Activated T-helper 1 cell treated with anti-CD3 and anti-CD28 coated beads, Interleukin-12 subunit alpha, Interleukin-12 subunit beta, Interleukin-2, Interleukin-4 antibody, amounts not matched to agents 30 ng/mL and 10 ng/mL and 1 ng/mL, durations not matched to agents 14 hours and 24 hours and 36 hours (primary cell): ENCODE measurements at regions of chr3 and their contacts with region 1.

Region 1: DNA sequence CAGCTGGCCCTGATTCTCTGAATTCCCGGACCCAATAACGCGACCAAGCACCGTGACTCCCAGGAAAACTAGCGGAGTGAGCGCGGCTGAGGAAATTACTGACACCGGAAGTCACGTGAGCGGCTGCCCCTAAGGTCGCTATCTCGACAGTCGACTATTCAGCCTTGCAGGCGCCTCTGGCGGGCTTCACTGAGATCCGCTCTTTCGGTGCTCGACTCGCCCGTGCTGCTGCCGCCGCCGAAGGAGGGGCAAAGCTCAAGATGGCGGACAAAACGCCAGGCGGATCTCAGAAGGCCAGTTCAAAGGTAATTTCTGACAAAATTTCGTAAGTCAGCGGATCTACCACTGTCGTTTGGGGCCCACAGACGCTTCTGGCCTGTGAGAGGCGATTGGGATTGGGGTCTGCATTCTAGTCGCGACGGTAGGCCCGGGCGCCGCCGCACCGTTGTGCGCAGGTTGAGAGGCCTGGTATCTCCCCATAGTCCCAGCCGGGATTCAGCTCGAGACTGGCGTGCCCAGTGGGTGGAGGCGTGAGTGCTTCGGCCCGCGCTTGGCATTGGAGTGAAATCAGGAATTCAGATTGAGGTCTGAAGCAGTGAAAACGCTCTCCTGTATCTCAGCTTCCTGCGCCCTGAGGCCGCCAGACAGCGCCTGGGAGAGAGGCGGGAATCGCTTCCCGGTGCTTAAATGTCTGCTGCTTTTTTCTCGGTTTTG is at the start of gene U2SURP:
- DNase-seq: peak; percentile 91
- H3K4me3 Mint-ChIP-seq: peak within 1 kb of the TSS; percentile 95
- H3K27ac Mint-ChIP-seq: peak within 1 kb of the TSS; percentile 96
- H3K4me1 Mint-ChIP-seq: peaks cover 45% of the 10 kb centered on the region
- H3K27me3 Mint-ChIP-seq: peaks cover 6% of the 10 kb centered on the region
- total RNA-seq, gene U2SURP: 186 and 205 TPM in 2 replicates

Region 2: DNA sequence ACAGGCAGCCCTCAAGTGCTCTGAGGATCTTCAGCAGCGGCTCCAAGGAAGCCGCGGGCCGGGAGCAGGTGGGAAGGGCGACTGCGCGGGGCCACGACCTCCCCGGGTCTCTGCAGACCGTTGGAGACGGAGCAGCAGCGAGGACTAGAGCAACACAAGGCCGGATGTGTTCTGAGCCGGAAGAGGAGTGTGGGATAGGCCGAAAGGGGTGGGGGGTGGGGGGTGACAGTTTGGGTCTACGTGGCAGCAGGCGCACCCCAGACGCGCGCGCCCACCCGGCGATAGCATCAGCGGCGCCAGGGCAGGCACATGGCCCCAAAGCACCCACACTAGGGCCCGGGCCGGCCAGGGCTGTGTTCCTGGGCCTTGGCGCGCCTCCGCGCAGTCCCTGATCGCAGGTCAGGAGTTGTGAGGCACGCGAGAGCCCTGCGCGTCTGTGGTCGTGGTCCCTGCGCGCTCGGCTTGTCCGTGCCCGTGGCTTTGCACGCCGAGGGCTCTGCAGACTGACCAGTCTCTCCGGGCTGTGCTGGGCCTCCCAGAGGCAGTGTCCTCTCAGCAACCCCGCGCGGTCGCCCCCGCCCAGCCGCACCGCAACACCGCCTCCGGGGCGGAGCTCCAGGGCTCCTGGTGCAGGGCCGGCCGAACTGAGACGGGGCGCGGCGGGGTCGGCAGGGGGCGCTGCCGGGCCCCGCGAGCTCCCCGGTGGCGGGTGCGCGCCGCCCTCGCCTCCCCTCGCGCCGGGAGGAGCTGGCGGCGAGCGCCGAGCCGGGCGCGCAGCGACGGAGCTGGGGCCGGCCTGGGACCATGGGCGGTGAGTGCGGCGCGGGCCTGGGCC is 1770.2 kb before region 1 on chr3 and contains the start of gene PXYLP1:
- intact Hi-C with region 1: loop called (anchors 5 kb)
- DNase-seq: peak; percentile 92
- H3K4me3 Mint-ChIP-seq: peak within 1 kb of the TSS; percentile 92
- H3K27ac Mint-ChIP-seq: peak within 1 kb of the TSS; percentile 98
- H3K4me1 Mint-ChIP-seq: peaks cover 54% of the 10 kb centered on the region
- H3K27me3 Mint-ChIP-seq: peaks cover 4% of the 10 kb centered on the region
- total RNA-seq, gene PXYLP1: 11.6 and 12.1 TPM in 2 replicates

Region 3: DNA sequence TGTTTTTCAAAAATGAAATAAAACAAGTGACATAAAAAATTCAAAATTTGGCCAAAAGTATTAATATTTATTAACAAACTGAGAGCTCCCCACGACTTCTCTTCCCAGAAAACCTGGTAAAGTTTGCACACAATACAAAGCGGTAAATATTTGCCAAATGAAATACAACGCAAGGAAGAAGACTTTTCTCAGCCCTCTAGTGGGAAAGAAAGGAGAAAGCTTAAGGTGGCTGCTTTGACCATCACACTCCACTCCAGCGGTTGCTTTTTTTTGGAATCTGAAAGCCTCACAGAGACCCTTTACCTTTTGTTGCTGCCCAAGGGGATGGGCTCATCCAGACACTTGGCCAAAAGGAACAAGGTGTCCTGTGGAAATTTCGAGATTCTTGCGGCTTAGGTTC is 775.0 kb before region 1 on chr3:
- intact Hi-C with region 1: loop called (anchors 5 kb)
- DNase-seq: no peak
- H3K4me3 Mint-ChIP-seq: peak overlapping the region; percentile 72
- H3K27ac Mint-ChIP-seq: no peak overlapping the region
- H3K4me1 Mint-ChIP-seq: peaks cover 20% of the 10 kb centered on the region
- H3K27me3 Mint-ChIP-seq: no peaks in the 10 kb centered on the region

Region 4: DNA sequence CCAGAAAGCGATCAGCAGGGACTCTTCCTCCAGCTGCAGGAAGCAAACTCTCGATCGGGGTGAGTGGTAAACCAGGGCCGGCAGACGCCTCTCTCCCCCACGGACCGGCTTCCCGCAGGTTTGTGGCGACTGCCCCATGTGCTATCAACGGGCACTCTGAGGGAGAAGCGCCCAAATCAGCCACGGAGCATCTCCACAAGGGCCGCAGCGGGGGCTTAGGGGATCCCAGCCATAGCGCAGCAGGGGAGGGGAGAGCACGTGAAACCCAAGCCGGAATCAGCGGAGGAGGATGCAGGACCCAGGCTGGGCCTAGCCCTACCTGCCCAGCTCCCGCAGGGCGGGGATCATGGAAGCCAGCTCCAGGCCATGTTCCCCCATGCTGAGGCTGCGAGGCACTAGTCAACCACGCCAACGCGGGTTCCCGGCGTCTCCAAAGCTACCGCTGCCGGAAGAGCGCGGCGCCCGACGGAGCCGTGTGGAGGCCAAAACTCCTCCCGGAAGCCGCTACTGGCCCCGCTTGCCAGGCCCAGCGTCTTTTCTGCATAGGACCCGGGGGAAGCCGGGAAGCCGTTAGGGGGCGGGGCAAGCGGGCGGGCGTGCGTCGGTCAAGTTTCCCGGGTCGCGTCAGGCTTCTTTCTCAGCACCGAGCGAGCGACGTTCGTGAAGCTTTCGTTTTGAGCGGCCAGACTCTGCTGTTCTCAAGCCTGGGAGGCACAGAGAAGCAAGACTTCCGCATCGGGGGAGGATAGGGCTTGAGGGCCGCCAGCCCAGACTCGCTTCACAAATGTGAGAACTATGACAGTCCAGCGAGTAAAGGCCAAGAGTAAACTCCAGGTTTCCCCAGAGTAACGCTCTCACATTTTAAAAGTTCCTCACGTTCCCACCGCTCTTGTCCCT is 423.0 kb before region 1 on chr3 and contains the start of gene ATR:
- intact Hi-C with region 1: loop called (anchors 1 kb)
- DNase-seq: peak; percentile 96
- H3K4me3 Mint-ChIP-seq: peak within 1 kb of the TSS; percentile 100
- H3K27ac Mint-ChIP-seq: peak within 1 kb of the TSS; percentile 100
- H3K4me1 Mint-ChIP-seq: peaks cover 46% of the 10 kb centered on the region
- H3K27me3 Mint-ChIP-seq: peaks cover 10% of the 10 kb centered on the region
- total RNA-seq, gene ATR: 27.0 and 35.5 TPM in 2 replicates

Region 5: GRCh38 chr3:142723968-142724681 is 277.4 kb before region 1 on chr3 and contains the start of gene TRPC1:
- intact Hi-C with region 1: loop called (anchors 1 kb)
- DNase-seq: peak; percentile 73
- H3K4me3 Mint-ChIP-seq: peak within 1 kb of the TSS; percentile 86
- H3K27ac Mint-ChIP-seq: peak within 1 kb of the TSS; percentile 83
- H3K4me1 Mint-ChIP-seq: peaks cover 4% of the 10 kb centered on the region
- H3K27me3 Mint-ChIP-seq: peaks cover 50% of the 10 kb centered on the region
- total RNA-seq, gene TRPC1: 0.66 and 1.1 TPM in 2 replicates